Heart left ventricle (tissue), 16 donors: ENCODE measurements at regions of chr7 and their contacts with region 1.

Region 1: DNA sequence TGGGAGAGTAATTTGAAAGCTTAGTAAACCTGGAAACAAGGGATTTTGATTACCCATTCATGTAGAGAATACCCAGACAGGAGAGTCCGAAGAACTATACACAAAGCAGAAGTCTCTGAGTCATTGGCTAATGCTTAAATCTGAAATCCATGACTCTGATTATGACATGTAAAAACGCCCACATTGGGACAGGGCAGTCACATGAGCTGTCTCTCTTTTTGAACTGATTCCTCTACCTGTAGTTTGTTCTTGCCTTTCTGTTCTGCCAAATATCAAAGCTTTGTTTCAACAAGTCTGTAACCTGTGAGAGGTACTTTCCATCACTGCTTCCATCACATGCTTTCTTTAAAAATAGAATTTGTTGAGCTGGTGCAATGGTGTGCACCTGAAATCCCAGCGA is 4.3 kb upstream of the GPNMB start:
- DNase-seq: no peak
- ATAC-seq: peak in 1 of 4 donors; percentile 18
- H3K4me3 ChIP-seq: no peak overlapping the region
- H3K27ac ChIP-seq: peak overlapping the region in 8 of 12 donors; percentile 15 to 75 (median 56)
- H3K4me1 ChIP-seq: peaks cover 0 to 25% (median 4%) of the 10 kb centered on the region in 12 donors
- H3K27me3 ChIP-seq: peaks cover 0 to 4% (median 0%) of the 10 kb centered on the region in 9 donors
- CTCF ChIP-seq: no peak
- POLR2A ChIP-seq: no peak

Region 2: GRCh38 chr7:23168111-23168885 is 74.0 kb before region 1 on chr7:
- intact Hi-C with region 1: no loop called
- DNase-seq: no peak
- ATAC-seq: peak; percentile 71 to 90 (median 80)
- H3K4me3 ChIP-seq: no peak overlapping the region
- H3K27ac ChIP-seq: peak overlapping the region; percentile 25 to 79 (median 66)
- H3K4me1 ChIP-seq: peaks cover 0 to 12% (median 0%) of the 10 kb centered on the region in 12 donors
- H3K27me3 ChIP-seq: no peaks in the 10 kb centered on the region
- CTCF ChIP-seq: no peak
- POLR2A ChIP-seq: no peak

Region 3: DNA sequence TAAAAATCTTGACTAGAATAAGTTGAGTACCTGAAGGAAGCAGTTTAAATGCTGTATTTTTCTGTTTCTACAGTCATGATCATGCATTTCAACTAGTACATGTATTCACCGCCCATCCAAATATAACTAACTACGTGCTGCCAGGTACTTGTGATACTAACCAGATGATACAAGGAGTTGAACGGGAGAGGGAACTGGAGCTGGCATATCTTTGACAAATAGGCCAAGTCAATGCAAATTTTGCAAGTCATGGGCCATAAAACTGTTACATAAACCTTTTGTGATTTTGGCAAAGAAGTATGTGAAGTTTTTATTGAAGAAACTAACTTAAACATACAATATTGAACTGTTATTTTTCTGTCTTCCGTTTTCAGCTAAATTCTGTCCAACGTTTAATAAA is 46.0 kb before region 1 on chr7:
- intact Hi-C with region 1: loop called in 5 of 10 experiments (anchors 5 kb)
- DNase-seq: no peak
- ATAC-seq: peak; percentile 82 to 93 (median 92)
- H3K4me3 ChIP-seq: no peak overlapping the region
- H3K27ac ChIP-seq: peak overlapping the region in 11 of 12 donors; percentile 3 to 78 (median 48)
- H3K4me1 ChIP-seq: peaks cover 0 to 18% (median 4%) of the 10 kb centered on the region in 12 donors
- H3K27me3 ChIP-seq: no peaks in the 10 kb centered on the region
- CTCF ChIP-seq: no peak
- POLR2A ChIP-seq: no peak

Region 4: GRCh38 chr7:23205909-23206767 is 36.2 kb before region 1 on chr7:
- intact Hi-C with region 1: loop called in 3 of 10 experiments (anchors 5 kb)
- DNase-seq: peak in 2 of 5 donors; percentile 42 to 68
- ATAC-seq: peak in 3 of 4 donors; percentile 47 to 82 (median 78)
- H3K4me3 ChIP-seq: peak overlapping the region in 9 of 12 donors; percentile 34 to 53 (median 41)
- H3K27ac ChIP-seq: peak overlapping the region in 6 of 12 donors; percentile 11 to 79 (median 34)
- H3K4me1 ChIP-seq: peaks cover 0 to 21% (median 0%) of the 10 kb centered on the region in 12 donors
- H3K27me3 ChIP-seq: no peaks in the 10 kb centered on the region
- CTCF ChIP-seq: no peak
- POLR2A ChIP-seq: no peak